ENCODE measurements at regions of chr11 and their contacts with region 1.

Region 1: DNA sequence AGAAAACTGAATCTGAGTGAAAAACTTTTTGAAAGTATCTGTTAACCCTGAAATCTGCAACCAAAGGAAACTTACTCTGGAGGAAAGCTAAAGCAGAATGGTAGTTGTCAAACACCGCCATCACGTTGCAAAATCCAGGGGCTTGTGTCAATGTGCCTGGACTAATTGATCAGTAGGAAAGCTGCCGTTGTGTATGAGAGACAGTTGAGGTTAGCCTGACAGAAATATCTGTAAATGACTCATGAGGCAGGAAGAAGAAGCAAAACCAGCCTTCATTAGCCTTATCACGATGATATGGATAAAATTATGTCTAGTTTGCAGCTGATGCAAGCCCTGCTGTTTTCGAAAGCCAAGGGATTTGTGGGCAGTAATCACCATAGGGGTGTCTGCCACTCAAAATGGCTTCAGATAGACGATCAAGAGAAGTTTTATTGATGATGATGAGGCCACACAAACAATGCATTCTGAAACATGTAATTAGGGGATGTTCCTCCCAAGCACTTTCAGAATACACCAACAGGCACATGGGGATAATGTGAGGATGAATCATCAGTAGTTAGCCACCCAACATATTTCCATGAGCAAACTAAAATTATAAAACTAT is 8.9 kb downstream of the SCGB1A1 start:
- DNase-seq: peak; percentile 44
- ATAC-seq: peak; percentile 57
- H3K4me3 Mint-ChIP-seq: peak overlapping the region; percentile 18
- H3K27ac Mint-ChIP-seq: peak overlapping the region; percentile 83
- H3K4me1 Mint-ChIP-seq: peaks cover 40% of the 10 kb centered on the region
- H3K27me3 Mint-ChIP-seq: peaks cover 7% of the 10 kb centered on the region
- CTCF ChIP-seq: no peak

Region 2: DNA sequence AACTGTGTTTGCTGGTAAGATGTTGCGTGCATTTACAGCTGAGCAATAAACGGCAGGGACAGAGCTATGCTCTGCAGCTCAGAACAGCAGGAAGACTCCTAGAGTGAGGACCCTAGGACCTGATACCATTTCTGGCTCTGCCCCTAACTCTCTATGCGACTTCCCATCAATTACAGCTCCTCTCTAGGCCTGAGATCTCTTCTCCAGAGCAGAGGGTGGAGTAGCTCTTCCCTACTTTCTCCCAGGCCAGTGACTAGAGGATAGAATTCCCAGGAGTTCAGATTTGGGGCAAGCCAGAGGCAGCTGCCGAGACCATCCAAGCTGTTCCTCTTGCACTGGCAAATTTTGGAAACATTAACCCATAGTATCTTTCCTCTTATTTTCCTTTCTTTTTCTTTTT is 21.7 kb before region 1 on chr11:
- CTCF ChIA-PET with region 1: interaction called, 34 read pairs
- POLR2A ChIA-PET with region 1: interaction called, 3 read pairs
- intact Hi-C with region 1: no loop called
- DNase-seq: no peak
- ATAC-seq: no peak
- H3K4me3 Mint-ChIP-seq: no peak overlapping the region
- H3K27ac Mint-ChIP-seq: no peak overlapping the region
- H3K4me1 Mint-ChIP-seq: peaks cover 22% of the 10 kb centered on the region
- H3K27me3 Mint-ChIP-seq: no peaks in the 10 kb centered on the region
- CTCF ChIP-seq: no peak

Region 3: DNA sequence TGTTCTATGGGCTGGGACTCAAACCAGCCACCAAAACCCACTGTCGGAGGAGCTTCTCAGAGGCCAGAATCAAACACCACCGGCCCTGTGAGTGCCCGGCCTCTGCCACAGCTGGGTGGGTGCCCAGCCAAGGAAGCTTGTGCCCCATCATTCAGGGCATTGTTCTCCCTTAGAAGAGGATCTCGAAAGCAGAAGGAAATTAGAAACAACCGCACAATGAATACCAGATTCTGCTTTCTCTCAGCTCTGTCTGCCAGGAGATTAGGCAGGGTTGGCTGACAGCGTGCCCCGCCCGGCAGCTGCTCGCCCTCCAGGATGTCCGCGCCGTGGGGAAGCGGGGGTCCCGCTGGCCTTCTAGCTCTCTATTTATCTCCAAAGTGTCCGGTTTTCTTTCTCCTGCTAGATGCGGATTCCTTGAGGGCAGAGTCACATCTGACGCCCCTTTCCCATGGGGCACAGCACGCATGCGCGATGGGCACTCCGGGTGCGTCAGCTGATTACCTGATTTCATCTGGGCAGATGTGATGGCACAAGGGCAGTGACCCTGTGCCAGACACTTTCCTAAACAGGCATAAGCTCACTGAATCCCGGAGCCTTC is 16.6 kb after region 1 on chr11:
- CTCF ChIA-PET with region 1: interaction called, 17 read pairs
- POLR2A ChIA-PET with region 1: no interaction called
- intact Hi-C with region 1: no loop called
- DNase-seq: peak; percentile 36
- ATAC-seq: peak; percentile 30
- H3K4me3 Mint-ChIP-seq: peak overlapping the region; percentile 63
- H3K27ac Mint-ChIP-seq: no peak overlapping the region
- H3K4me1 Mint-ChIP-seq: peaks cover 9% of the 10 kb centered on the region
- H3K27me3 Mint-ChIP-seq: peaks cover 17% of the 10 kb centered on the region
- CTCF ChIP-seq: no peak

Region 4: GRCh38 chr11:62458212-62459002 is 30.7 kb after region 1 on chr11:
- CTCF ChIA-PET with region 1: interaction called, 14 read pairs
- POLR2A ChIA-PET with region 1: no interaction called
- intact Hi-C with region 1: no loop called
- DNase-seq: no peak
- ATAC-seq: no peak
- H3K4me3 Mint-ChIP-seq: no peak overlapping the region
- H3K27ac Mint-ChIP-seq: no peak overlapping the region
- H3K4me1 Mint-ChIP-seq: no peaks in the 10 kb centered on the region
- H3K27me3 Mint-ChIP-seq: no peaks in the 10 kb centered on the region
- CTCF ChIP-seq: no peak

Region 5: DNA sequence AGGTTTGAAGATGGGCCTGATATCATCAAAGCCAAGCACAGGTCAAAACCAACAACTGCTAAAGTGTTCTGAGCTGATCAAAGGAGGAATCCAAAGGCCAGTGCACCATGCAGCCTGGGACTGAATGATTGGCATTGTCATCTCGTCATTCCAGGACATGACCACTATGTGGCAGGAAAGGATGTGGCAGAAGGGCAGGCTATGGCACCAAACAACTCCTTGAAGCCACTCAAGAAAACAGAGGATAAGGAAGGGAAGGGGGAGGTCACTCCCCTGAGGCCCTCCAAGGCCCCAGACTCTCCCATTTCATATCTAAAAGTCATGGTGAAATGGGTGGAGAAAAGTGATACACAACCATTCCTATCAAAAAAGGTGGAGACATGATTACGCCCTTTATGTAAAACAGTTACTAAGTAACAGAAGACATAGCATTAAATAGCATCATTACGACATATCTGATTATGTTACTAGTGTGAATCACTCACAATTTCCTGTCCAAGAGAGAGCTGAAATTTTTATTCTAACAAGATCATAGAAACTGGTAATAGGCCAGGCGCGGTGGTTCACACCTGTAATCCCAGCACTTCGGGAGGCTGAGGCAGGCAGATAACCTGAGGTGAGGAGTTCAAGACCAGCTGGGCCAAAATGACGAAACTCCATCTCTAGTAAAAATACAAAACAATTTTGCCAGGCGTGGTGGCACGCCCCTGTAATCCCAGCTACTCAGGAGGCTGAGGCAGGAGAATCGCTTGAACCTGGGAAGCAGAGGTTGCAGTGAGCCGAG is 69.6 kb after region 1 on chr11:
- CTCF ChIA-PET with region 1: interaction called, 11 read pairs
- POLR2A ChIA-PET with region 1: no interaction called
- intact Hi-C with region 1: no loop called
- DNase-seq: peak; percentile 33
- ATAC-seq: peak; percentile 79
- H3K4me3 Mint-ChIP-seq: no peak overlapping the region
- H3K27ac Mint-ChIP-seq: no peak overlapping the region
- H3K4me1 Mint-ChIP-seq: no peaks in the 10 kb centered on the region
- H3K27me3 Mint-ChIP-seq: peaks cover 8% of the 10 kb centered on the region
- CTCF ChIP-seq: peak; percentile 23

Region 6: GRCh38 chr11:62556108-62556871 is 128.6 kb after region 1 on chr11:
- CTCF ChIA-PET with region 1: interaction called, 66 read pairs
- POLR2A ChIA-PET with region 1: interaction called, 4 read pairs
- intact Hi-C with region 1: loop called (anchors 5 kb)
- DNase-seq: peak; percentile 95
- ATAC-seq: peak; percentile 68
- H3K4me3 Mint-ChIP-seq: peak overlapping the region; percentile 41
- H3K27ac Mint-ChIP-seq: peak overlapping the region; percentile 94
- H3K4me1 Mint-ChIP-seq: peaks cover 92% of the 10 kb centered on the region
- H3K27me3 Mint-ChIP-seq: no peaks in the 10 kb centered on the region
- CTCF ChIP-seq: no peak

Region 7: DNA sequence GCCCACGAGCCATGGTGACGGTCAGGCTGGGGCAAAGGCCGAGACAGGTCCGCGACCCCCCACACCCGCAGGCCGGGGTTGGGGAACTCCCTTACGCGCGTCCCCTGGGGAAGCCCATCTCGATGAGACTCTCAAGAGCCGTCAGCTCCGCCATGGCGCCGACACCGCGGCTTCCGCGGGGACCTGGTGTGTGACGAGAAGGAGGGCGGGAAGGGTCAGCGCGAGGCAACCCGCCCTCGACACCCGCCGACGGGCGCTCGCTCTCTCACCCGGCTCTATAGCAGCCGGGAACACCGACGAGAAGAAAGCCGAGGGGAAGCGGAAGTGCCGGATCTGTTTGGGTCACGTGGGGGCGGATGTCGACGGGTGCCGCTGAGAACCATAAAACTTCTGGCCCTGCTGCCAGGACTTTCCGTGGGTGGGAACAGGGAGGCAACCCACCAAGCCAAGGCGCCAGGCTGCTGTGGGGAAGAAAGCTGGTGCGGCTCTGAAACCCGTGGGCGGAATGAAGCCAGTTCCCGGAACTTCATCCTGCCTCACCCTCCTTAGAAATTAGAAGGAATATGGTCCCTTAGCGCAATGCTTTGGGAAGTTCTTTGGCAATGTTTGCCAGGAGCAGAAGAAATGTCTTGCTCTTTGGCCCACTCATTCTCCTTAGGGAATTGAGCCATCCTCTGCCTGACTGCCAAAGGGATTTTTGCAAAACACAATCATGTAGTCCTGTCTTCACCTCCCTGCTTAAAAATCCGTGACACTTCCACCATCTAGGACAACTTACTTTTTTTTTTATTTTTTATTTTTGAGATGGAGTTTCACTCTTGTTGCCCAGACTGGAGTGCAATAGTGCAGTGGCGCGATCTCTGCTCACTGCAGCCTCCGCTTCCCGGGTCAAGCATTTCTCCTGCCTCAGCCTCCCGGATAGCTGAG is 251.3 kb after region 1 on chr11 and contains the start of gene UBXN1:
- CTCF ChIA-PET with region 1: interaction called, 12 read pairs
- POLR2A ChIA-PET with region 1: no interaction called
- intact Hi-C with region 1: no loop called
- DNase-seq: peak; percentile 94
- ATAC-seq: peak; percentile 76
- H3K4me3 Mint-ChIP-seq: peak within 1 kb of the TSS; percentile 86
- H3K27ac Mint-ChIP-seq: peak within 1 kb of the TSS; percentile 93
- H3K4me1 Mint-ChIP-seq: peaks cover 29% of the 10 kb centered on the region
- H3K27me3 Mint-ChIP-seq: no peaks in the 10 kb centered on the region
- CTCF ChIP-seq: no peak
- total RNA-seq, gene UBXN1: 104 to 120 TPM